Mammary epithelial cell (primary cell): ENCODE measurements at regions of chr11 and their contacts with region 1.

Region 1: GRCh38 chr11:100575870-100576705 is 111.0 kb upstream of the ARHGAP42 start:
- DNase-seq: peak; percentile 38
- H3K4me3 ChIP-seq: no peak overlapping the region
- H3K27ac ChIP-seq: no peak overlapping the region
- H3K4me1 ChIP-seq: peaks cover 15% of the 10 kb centered on the region
- H3K27me3 ChIP-seq: no peaks in the 10 kb centered on the region
- CTCF ChIP-seq: peak; percentile 74 to 80

Region 2: DNA sequence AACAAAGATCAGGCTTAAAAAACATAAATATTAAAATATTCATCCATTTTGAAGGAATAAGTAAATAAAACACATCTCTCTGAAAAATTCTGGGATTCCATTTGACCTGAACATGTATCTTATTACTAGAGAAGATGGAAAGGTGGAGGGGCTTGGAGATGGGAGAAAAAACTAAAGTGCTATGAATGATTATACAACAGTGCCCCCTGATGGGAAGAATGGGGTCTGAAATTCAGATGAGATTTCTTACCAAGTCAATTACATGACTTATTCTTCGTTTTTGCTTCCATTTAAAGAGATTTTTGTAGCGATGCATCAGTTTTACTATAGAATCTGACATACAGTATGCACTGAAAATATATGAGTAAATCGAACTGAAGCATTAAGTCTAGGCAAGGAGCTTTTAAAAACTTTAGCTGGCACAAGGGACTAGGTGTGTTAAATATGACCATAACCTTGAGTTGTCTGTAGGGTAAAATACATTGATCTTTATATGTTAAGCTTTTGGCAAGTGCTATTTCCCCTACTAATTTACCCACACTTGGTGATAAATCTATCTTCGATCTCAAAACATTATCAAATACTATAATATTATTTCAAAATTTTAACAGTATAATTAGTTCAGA is 836.5 kb before region 1 on chr11:
- CTCF ChIA-PET with region 1: no interaction called
- dilution Hi-C with region 1: no loop called
- in situ Hi-C with region 1: no loop called
- intact Hi-C with region 1: loop called (anchors 10 kb)
- DNase-seq: peak; percentile 1
- H3K4me3 ChIP-seq: no peak overlapping the region
- H3K27ac ChIP-seq: no peak overlapping the region
- H3K4me1 ChIP-seq: no peaks in the 10 kb centered on the region
- H3K27me3 ChIP-seq: no peaks in the 10 kb centered on the region
- CTCF ChIP-seq: peak; percentile 34 to 50

Region 3: GRCh38 chr11:100354736-100355135 is 221.4 kb before region 1 on chr11:
- CTCF ChIA-PET with region 1: no interaction called
- dilution Hi-C with region 1: no loop called
- in situ Hi-C with region 1: no loop called
- intact Hi-C with region 1: no loop called
- DNase-seq: peak; percentile 34
- H3K4me3 ChIP-seq: no peak overlapping the region
- H3K27ac ChIP-seq: no peak overlapping the region
- H3K4me1 ChIP-seq: no peaks in the 10 kb centered on the region
- H3K27me3 ChIP-seq: no peaks in the 10 kb centered on the region
- CTCF ChIP-seq: no peak

Region 4: DNA sequence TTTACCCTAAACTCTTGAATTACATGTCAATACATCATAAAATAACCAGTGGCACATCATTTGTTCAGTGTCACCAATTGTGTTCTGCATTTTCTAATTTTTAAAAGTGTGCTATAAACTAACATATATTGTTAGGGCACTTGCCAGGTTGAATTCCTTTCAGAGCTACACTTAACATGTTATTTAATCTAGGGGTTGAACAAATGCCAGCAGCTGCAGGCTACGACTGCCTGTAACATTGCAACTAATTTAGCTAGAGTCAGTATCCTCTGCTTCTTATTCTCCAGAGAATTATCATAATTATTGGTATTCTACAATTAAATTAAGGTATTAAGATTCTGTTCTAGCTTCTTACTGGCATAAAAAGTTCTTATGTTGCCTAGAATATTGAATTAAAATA is 64.6 kb after region 1 on chr11:
- CTCF ChIA-PET with region 1: no interaction called
- dilution Hi-C with region 1: no loop called
- in situ Hi-C with region 1: no loop called
- intact Hi-C with region 1: no loop called
- DNase-seq: no peak
- H3K4me3 ChIP-seq: no peak overlapping the region
- H3K27ac ChIP-seq: no peak overlapping the region
- H3K4me1 ChIP-seq: no peaks in the 10 kb centered on the region
- H3K27me3 ChIP-seq: no peaks in the 10 kb centered on the region
- CTCF ChIP-seq: no peak

Region 5: GRCh38 chr11:100682247-100682969 is 106.3 kb after region 1 on chr11:
- CTCF ChIA-PET with region 1: interaction called, 5 read pairs
- dilution Hi-C with region 1: no loop called
- in situ Hi-C with region 1: no loop called
- intact Hi-C with region 1: loop called (anchors 1 kb)
- DNase-seq: peak; percentile 24
- H3K4me3 ChIP-seq: no peak overlapping the region
- H3K27ac ChIP-seq: no peak overlapping the region
- H3K4me1 ChIP-seq: peaks cover 32% of the 10 kb centered on the region
- H3K27me3 ChIP-seq: no peaks in the 10 kb centered on the region
- CTCF ChIP-seq: peak; percentile 29 to 53

Region 6: DNA sequence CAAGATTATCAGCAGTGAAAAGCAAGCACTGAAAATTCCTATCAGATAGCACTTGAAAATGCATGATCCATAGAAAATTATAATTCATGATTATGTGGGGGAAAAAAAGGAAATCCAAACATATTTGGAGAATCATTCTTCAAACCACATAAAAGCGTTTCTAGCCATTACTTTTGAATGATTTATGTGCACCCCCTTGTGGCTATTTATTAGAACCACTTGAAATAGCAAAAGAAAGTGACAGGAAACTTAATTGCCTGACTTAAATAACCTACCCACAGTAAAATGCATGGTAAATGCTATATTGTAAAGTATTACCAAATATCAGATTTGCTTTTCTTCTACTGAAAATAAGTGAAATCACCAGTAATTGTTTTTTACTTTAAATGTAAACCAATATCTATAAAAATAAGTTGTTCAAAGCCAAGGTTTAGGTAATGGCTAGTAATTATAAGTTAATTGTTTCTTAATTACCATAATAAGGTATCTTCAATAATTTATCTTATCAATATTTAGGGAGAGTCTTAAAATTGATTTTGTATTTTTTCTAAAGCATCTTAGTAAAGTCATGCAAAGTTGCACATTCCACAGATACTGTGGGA is 279.5 kb after region 1 on chr11:
- CTCF ChIA-PET with region 1: no interaction called
- dilution Hi-C with region 1: no loop called
- in situ Hi-C with region 1: loop called (anchors 5 kb)
- intact Hi-C with region 1: loop called (anchors 1 kb)
- DNase-seq: peak; percentile 36
- H3K4me3 ChIP-seq: no peak overlapping the region
- H3K27ac ChIP-seq: no peak overlapping the region
- H3K4me1 ChIP-seq: peaks cover 14% of the 10 kb centered on the region
- H3K27me3 ChIP-seq: no peaks in the 10 kb centered on the region
- CTCF ChIP-seq: peak; percentile 54 to 59

Region 7: DNA sequence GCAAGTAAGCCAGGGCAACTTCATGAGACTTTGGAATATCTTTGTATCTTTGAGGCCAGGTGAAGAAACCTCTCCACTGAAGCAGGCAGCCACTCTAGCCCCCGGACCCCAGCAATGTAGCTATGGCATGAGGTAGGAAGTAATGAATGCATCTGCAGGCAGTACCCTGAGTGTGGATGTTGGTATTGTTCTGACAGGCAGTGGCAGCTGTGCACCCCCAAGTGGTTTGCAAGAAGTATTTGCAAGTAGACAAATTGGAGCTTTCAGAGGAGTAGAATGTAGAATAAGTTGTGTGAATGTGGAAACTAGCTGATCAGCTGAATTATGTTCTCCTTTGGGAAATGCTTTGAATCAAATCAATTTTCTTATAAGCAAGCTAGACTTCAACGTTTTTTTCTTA is 747.9 kb after region 1 on chr11:
- CTCF ChIA-PET with region 1: no interaction called
- dilution Hi-C with region 1: no loop called
- in situ Hi-C with region 1: no loop called
- intact Hi-C with region 1: loop called (anchors 10 kb)
- DNase-seq: peak; percentile 5
- H3K4me3 ChIP-seq: no peak overlapping the region
- H3K27ac ChIP-seq: no peak overlapping the region
- H3K4me1 ChIP-seq: no peaks in the 10 kb centered on the region
- H3K27me3 ChIP-seq: no peaks in the 10 kb centered on the region
- CTCF ChIP-seq: peak in 1 of 2 donors; percentile 24